Panc1 (cell line): ENCODE measurements at regions of chr9 and their contacts with region 1.

Region 1: GRCh38 chr9:98108531-98109031 is 10.4 kb downstream of the TRIM14 start:
- DNase-seq: no peak
- ATAC-seq: no peak
- H3K4me3 ChIP-seq: no peak overlapping the region
- H3K27ac ChIP-seq: no peak overlapping the region
- H3K4me1 ChIP-seq: no peaks in the 10 kb centered on the region
- H3K27me3 ChIP-seq: no peaks in the 10 kb centered on the region
- CTCF ChIP-seq: no peak

Region 2: GRCh38 chr9:98158071-98158831 is 49.7 kb after region 1 on chr9:
- CTCF ChIA-PET with region 1: no interaction called
- POLR2A ChIA-PET with region 1: no interaction called
- in situ Hi-C with region 1: no loop called
- intact Hi-C with region 1: no loop called
- DNase-seq: no peak
- ATAC-seq: no peak
- H3K4me3 ChIP-seq: no peak overlapping the region
- H3K27ac ChIP-seq: no peak overlapping the region
- H3K4me1 ChIP-seq: 0 out of 2 replicates have a peak, but pooled peaks cover 6% of the 10 kb centered on the region
- H3K27me3 ChIP-seq: no peaks in the 10 kb centered on the region
- CTCF ChIP-seq: no peak

Region 3: DNA sequence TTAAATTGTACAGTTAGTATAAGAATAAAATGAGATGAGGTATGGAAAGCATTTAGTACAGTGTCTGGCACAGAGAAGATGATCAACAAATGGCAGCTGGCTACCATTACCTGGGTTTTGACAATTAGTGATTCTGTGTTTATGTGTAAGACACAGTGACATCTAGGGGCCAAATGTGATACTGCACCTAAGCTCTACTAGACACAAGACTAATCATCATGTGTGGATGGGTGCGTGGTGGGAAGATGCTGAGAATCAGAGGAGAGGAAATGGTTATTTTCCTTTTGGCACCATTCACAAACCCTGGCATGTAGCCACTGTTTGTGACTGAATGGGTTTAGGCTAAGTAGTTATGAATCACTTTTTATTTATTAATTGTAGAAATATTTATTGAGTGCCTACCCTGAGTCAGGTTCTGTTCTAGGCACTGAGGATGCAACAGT is 256.7 kb after region 1 on chr9:
- CTCF ChIA-PET with region 1: interaction called, 11 read pairs
- POLR2A ChIA-PET with region 1: no interaction called
- in situ Hi-C with region 1: no loop called
- intact Hi-C with region 1: no loop called
- DNase-seq: no peak
- ATAC-seq: no peak
- H3K4me3 ChIP-seq: no peak overlapping the region
- H3K27ac ChIP-seq: no peak overlapping the region
- H3K4me1 ChIP-seq: no peaks in the 10 kb centered on the region
- H3K27me3 ChIP-seq: no peaks in the 10 kb centered on the region
- CTCF ChIP-seq: peak; percentile 62